ENCODE measurements at regions of chr2 and their contacts with region 1.

Region 1: GRCh38 chr2:230254152-230254881 is 28.8 kb downstream of the SP140 start:
- DNase-seq: no peak
- H3K4me3 Mint-ChIP-seq: no peak overlapping the region
- H3K27ac Mint-ChIP-seq: no peak overlapping the region
- H3K4me1 Mint-ChIP-seq: peaks cover 12% of the 10 kb centered on the region
- H3K27me3 Mint-ChIP-seq: no peaks in the 10 kb centered on the region

Region 2: DNA sequence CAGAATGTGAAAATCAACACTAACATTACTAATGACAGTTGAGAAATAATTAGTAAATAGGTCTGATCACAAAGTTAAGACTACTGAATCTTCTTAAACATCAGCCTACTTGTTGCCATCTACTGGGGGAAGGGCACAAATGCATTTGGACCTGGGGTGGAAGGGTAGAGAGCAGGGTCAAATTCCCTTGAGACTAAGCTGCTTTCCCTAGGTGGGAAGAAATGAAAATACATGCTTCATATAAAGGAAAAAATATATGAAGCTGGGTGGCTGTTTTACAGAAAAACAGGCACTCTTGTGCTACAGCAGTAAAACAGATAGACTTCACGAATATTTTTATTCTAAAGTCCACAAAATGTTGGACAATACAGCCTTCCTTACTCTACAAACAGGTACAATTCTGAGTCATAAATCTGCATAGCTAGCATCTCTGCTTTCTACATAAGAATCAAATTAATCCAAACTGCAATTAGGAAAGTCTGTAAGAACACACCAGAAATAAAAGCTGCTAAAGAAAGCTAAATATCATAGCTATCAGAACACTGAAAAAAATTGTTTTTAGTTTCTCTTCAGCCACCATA is 343.4 kb before region 1 on chr2:
- intact Hi-C with region 1: no loop called
- DNase-seq: no peak
- H3K4me3 Mint-ChIP-seq: peak overlapping the region; percentile 6
- H3K27ac Mint-ChIP-seq: peak overlapping the region; percentile 75
- H3K4me1 Mint-ChIP-seq: peaks cover 39% of the 10 kb centered on the region
- H3K27me3 Mint-ChIP-seq: no peaks in the 10 kb centered on the region

Region 3: DNA sequence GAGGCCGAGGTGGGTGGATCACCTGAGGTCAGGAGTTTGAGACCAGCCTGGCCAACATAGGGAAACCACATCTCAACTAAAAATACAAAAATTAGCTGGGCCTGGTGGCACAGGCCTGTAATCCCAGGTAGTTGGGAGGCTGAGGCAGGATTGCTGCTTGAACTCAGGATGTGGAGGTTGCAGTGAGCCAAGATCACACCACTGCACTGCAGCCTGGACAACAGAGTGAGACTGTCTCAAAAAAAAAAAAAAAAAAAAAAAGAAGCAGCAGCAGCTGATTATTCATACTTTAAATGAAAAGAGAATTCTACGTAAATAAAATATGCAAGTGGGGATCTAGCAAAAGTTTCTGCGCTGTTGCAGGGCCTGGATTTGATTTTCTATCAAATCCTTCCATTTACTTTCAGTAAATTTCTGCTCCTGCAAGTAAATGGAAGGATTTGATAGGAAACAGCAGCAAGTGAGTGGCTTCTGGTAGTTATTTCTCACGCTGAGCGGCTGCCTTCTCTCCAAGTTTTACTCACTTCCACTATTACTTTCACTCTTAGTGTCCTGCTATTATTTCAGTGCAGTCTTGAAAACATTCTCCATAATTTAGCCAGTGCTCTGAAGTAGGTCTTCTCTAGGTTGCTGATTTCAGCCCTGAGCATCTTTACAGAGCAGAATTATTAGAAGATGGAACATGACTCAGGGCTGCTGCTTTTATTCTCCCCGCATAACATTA is 254.0 kb before region 1 on chr2:
- intact Hi-C with region 1: no loop called
- DNase-seq: no peak
- H3K4me3 Mint-ChIP-seq: no peak overlapping the region
- H3K27ac Mint-ChIP-seq: no peak overlapping the region
- H3K4me1 Mint-ChIP-seq: peaks cover 7% of the 10 kb centered on the region
- H3K27me3 Mint-ChIP-seq: peaks cover 2% of the 10 kb centered on the region

Region 4: DNA sequence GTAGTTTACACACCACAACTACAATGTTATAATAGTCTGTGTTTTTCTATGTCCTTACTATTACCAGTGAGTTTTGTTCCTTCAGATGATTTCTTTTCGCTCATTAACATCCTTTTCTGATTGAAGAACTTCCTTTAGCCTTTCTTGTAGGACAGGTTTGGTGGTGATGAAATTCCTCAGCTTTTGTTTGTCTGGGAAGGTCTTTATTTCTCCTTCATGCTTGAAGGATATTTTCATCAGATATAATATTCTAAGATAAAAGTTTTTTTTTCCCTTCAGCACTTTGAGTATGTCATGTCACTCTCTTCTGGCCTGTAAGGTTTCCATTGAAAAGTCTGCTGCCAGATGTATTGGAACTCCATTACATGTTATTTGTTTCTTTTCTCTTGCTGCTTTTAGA is 147.5 kb before region 1 on chr2:
- intact Hi-C with region 1: no loop called
- DNase-seq: no peak
- H3K4me3 Mint-ChIP-seq: no peak overlapping the region
- H3K27ac Mint-ChIP-seq: no peak overlapping the region
- H3K4me1 Mint-ChIP-seq: no peaks in the 10 kb centered on the region
- H3K27me3 Mint-ChIP-seq: peaks cover 17% of the 10 kb centered on the region

Region 5: GRCh38 chr2:230225486-230225885 is 28.8 kb before region 1 on chr2 and contains the start of gene SP140:
- intact Hi-C with region 1: loop called (anchors 1 kb)
- DNase-seq: peak; percentile 80
- H3K4me3 Mint-ChIP-seq: peak within 1 kb of the TSS; percentile 91
- H3K27ac Mint-ChIP-seq: peak within 1 kb of the TSS; percentile 98
- H3K4me1 Mint-ChIP-seq: peaks cover 63% of the 10 kb centered on the region
- H3K27me3 Mint-ChIP-seq: no peaks in the 10 kb centered on the region
- total RNA-seq, gene SP140: 235 and 243 TPM in 2 replicates

Region 6: DNA sequence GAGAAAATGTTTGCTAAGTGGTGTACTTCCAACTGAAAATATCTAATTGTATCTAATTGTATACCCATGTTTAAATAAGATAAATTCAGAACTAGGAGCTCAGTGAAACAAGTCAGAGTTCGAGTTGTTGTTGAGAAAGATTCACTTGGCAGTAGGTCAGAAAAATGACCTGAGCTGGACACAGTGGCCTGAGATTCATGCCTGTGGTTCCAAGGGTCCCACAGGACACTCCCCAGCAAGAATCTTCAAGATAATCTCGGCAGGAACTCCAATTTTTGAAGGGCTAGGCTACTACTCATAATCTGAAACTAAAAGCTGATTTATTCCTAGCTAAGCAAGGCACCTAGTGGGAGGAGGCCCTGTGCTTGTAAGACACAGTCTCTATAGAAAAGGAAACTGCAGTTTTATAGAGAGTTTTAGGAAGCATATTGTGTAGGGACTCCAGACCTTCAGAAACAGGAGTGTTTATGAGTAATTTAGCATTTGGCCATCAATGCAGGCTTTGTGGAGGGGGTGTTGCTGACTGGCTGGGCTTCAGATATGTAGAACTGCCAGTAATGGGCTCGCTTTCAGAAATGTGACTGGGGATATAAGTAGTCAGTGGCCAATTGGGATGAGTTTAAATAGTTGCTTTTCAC is 14.4 kb after region 1 on chr2:
- intact Hi-C with region 1: loop called (anchors 1 kb)
- DNase-seq: no peak
- H3K4me3 Mint-ChIP-seq: peak overlapping the region; percentile 43
- H3K27ac Mint-ChIP-seq: peak overlapping the region; percentile 80
- H3K4me1 Mint-ChIP-seq: peaks cover 66% of the 10 kb centered on the region
- H3K27me3 Mint-ChIP-seq: no peaks in the 10 kb centered on the region

Region 7: DNA sequence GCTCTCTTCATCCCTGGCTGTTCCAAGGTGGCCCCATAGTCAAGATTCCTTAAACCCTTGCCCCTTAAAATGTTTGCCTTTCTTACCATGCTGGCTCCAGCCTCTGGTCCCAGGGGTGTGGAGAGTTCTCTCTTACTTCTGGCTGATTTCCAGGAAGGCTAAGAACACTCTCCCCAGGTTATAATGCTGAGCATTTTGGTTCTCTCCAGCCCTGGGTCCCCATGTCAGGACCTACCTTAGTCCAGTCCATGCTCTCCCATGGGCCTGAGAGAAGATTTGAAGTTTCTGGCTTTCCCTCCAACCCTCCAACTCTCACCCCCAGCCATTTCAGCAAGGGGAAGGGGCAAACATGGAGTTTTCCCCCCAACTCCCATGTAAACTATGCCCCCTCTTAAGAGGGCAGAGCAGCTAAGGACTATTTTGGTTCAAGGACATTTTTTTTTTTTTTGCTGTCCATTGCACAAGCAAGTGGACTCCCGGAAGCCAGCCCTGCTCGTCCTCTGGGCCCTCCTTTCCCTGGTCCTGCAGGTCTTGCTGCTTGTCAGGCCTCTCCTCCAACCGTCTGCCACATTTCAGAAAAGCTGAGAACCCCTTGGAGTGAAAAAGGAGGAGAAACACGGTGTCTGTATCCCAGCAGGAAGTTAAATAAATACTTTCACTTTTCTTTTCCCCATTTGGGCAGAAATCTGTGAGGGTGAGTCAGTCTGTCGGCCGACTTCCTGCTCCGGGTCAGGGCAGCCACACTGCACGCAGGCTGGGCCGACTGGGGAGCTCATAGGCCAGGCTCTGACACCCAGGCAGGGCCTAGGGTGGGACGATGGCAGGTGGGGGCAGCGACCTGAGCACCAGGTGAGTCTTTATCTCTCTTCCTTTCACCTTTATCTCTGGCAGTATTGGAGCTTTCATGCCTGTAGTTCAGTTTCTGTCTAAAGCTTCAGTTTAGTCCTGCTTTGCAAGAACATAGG is 72.4 kb after region 1 on chr2 and contains the start of gene SP140L:
- intact Hi-C with region 1: loop called (anchors 2 kb)
- DNase-seq: peak; percentile 73
- H3K4me3 Mint-ChIP-seq: peak within 1 kb of the TSS; percentile 98
- H3K27ac Mint-ChIP-seq: peak within 1 kb of the TSS; percentile 93
- H3K4me1 Mint-ChIP-seq: peaks cover 87% of the 10 kb centered on the region
- H3K27me3 Mint-ChIP-seq: no peaks in the 10 kb centered on the region
- total RNA-seq, gene SP140L: 57.4 and 57.8 TPM in 2 replicates

Region 8: DNA sequence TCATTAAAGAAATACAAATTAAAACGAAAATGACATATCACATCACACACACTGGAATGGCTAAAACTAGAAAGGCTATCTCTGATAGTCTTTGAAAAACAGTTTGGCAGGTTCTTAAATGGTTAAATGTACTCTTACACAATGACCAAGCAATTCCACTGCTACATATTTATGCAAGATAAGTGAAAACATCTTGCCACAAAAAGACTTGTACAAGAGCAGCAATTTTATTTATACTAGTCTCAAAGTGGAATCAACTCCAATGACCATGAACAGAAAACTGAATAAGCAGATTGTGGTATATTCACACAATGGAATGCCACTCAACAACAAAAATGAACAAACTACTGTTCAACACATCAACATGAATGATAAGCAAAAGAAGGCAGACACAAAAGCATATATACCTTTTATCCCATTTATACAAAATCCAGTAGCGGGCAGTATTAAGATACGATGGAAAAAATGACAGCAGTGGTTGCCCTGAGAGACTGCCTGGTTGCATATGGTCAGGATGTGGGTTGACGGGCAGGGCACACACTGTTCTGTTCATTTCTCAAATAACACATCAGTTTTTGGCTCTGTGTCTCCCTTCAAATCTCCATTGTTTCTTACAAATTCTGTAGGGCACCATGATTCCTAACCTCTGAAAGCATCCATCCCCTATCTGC is 187.0 kb after region 1 on chr2:
- intact Hi-C with region 1: loop called (anchors 5 kb)
- DNase-seq: peak; percentile 34
- H3K4me3 Mint-ChIP-seq: peak overlapping the region; percentile 31
- H3K27ac Mint-ChIP-seq: peak overlapping the region; percentile 90
- H3K4me1 Mint-ChIP-seq: peaks cover 65% of the 10 kb centered on the region
- H3K27me3 Mint-ChIP-seq: no peaks in the 10 kb centered on the region

Region 9: GRCh38 chr2:230721712-230722111 is 467.4 kb after region 1 on chr2:
- intact Hi-C with region 1: no loop called
- DNase-seq: no peak
- H3K4me3 Mint-ChIP-seq: peak overlapping the region; percentile 73
- H3K27ac Mint-ChIP-seq: peak overlapping the region; percentile 87
- H3K4me1 Mint-ChIP-seq: peaks cover 80% of the 10 kb centered on the region
- H3K27me3 Mint-ChIP-seq: no peaks in the 10 kb centered on the region

Region 10: GRCh38 chr2:230798769-230799399 is 544.6 kb after region 1 on chr2:
- intact Hi-C with region 1: loop called (anchors 10 kb)
- DNase-seq: peak; percentile 27
- H3K4me3 Mint-ChIP-seq: no peak overlapping the region
- H3K27ac Mint-ChIP-seq: no peak overlapping the region
- H3K4me1 Mint-ChIP-seq: peaks cover 26% of the 10 kb centered on the region
- H3K27me3 Mint-ChIP-seq: peaks cover under 1% of the 10 kb centered on the region